Mammary epithelial cell (primary cell): ENCODE measurements at regions of chr1 and their contacts with region 1.

Region 1: DNA sequence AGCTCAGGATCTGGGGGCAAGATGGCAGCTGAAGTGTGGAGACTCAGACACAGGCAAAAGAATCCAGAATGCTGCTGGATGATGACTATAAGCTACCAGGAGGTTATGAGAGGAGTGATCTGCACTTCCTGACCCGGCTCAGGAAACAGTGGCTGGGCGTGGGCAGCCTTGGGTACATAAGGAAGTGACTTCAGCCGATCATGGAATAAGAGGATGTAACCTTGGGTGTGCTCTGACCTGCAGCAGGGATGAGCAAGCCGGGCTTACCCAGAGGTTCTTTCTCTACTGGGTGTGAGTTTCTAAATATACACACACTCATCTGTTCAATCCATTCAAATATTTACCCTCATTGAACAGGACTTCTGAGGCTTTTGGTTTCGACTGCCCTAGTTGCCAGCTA is 62.7 kb downstream of the CD34 start:
- DNase-seq: peak; percentile 95
- H3K4me3 ChIP-seq: no peak overlapping the region
- H3K27ac ChIP-seq: peak overlapping the region; percentile 90
- H3K4me1 ChIP-seq: peaks cover 42% of the 10 kb centered on the region
- H3K27me3 ChIP-seq: no peaks in the 10 kb centered on the region
- CTCF ChIP-seq: no peak

Region 2: DNA sequence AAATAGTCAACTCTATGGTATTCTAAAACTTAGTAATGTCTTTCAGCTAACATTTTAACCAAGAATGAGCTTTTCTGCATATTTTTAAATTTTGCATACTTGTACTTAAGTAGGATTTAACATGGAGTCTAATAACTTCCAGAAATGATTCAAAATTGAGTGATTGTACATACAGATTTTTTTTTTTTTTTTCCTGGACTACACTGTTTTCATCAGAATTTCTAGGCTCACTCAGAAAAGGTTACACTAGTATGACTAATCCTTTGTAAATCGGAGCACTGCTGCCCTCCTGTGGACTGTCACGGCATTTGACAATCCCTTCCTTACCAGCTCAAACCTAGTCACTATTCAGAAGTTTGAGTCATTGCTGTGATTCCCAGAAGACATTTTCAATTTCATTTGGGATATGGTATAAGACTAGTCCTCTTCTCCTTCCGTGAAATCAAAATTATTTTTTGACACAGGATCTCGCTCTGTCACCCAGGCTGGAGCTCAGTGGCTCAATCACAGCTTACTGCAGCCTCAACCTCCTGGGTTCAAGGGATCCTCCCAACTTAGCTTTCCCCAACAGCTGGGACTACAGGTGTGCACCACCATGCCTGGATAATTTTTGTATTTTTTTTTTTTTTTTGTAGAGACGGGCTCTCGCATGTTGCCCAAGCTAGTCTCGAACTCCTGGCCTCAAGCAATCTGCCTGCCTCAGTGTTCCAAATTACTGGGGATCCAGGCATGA is 50.8 kb before region 1 on chr1:
- CTCF ChIA-PET with region 1: no interaction called
- dilution Hi-C with region 1: no loop called
- in situ Hi-C with region 1: no loop called
- intact Hi-C with region 1: no loop called
- DNase-seq: peak; percentile 79
- H3K4me3 ChIP-seq: no peak overlapping the region
- H3K27ac ChIP-seq: no peak overlapping the region
- H3K4me1 ChIP-seq: no peaks in the 10 kb centered on the region
- H3K27me3 ChIP-seq: no peaks in the 10 kb centered on the region
- CTCF ChIP-seq: peak; percentile 80 to 85

Region 3: DNA sequence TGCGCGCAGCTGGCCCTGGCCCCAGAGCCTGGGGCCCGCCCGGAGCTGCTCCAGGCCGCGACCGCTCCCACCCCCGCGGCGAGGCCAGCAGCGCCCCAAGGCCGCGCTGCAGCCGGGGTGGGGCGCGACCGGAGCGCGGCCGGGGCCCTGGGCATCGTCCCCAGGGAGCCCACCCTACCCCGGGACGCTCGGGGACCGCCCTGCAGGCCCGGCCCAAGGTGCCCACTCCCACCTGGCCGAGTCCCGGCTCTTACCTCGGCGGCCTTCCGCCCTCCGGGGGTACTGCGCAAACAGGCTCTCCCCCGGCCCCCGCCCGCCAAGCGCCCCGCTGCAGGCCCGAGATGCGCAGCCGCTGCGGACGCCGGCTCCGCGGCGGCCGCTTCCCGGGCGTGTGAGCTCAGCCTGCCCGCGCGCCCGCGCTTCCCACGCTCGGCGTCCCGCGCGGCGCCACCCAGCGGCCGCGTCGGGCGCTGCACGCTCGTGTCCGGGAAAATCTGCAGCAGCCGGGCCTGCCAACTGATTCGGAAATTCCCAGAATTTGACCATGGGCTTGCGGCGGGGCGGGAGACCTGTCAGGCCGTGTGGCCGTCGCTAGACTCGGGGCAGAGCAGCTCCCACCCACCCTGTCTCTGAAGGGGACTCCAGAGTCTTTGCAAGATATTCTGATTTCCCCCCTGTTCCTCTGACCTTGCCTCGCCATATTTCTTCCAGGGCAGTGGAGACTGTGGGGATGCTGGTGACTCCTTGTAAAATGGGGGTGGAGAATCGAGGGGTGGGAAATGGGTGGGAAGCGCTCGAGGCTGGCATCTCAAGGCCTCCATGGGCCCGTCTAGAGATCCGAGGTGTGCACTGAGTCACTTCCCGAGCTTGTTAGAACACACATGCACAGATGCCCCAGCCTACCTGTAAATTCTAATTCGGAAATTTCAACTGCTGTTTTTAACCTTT is 20.8 kb after region 1 on chr1:
- CTCF ChIA-PET with region 1: interaction called, 3 read pairs
- dilution Hi-C with region 1: no loop called
- in situ Hi-C with region 1: no loop called
- intact Hi-C with region 1: loop called (anchors 2 kb)
- DNase-seq: peak; percentile 80
- H3K4me3 ChIP-seq: peak overlapping the region; percentile 69 to 82 (median 80)
- H3K27ac ChIP-seq: peak overlapping the region; percentile 68
- H3K4me1 ChIP-seq: peaks cover 24% of the 10 kb centered on the region
- H3K27me3 ChIP-seq: no peaks in the 10 kb centered on the region
- CTCF ChIP-seq: peak; percentile 66 to 67